Activated naive CD4-positive, alpha-beta T cell treated with anti-CD3 and anti-CD28 coated beads for 36 hours (primary cell): ENCODE measurements at regions of chr2 and their contacts with region 1.

Region 1: GRCh38 chr2:74147727-74148456 is at the start of gene BOLA3:
- DNase-seq: peak; percentile 90
- H3K4me3 Mint-ChIP-seq: no peak within 1 kb of the TSS
- H3K27ac Mint-ChIP-seq: no peak within 1 kb of the TSS
- H3K4me1 Mint-ChIP-seq: peaks cover 4% of the 10 kb centered on the region
- H3K27me3 Mint-ChIP-seq: no peaks in the 10 kb centered on the region
- total RNA-seq, gene BOLA3: 103 to 112 TPM

Region 2: DNA sequence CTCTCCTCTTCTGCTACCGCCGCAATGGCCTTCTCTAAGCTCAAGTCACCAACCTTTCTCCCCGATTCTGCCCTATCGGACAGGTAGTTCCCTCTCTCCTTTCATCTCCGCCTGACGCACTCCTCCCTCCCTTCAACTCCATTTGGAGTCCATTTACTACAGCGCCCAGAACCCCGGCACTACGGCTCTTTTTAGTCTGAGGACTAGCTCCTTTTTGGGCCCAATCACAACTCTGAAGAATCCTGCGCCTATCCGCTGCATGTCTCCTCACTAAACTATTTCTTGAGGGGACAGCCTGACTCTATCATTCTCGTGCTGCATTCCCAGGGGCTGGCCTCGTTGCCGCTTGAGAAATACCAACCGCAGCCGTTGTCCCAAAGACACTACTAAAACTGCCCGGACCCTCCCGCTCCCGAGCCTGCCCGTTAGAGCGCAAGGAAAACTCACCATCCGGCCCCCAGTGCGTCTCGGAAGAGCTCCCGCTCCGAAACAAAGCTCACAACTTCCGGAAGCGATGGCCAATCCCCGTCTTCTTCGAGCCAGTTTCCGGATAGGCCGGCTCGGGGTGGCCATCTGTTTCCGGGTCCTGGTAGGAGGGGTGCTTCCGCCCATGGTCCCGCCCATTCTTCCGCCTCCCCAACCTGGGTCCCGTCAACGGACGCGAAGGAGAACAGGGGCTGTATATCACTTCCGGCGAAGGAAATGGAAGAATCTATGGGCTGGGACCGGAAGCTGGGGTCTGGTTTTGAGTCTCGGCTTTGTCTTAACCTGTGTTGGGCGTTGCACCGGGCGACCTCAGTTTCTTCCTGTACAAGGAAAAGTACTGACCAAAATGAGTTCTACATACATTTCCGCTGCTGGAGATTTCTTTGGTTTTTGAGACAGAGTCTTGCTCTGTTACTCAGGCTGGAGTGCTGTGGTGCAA is 410.8 kb before region 1 on chr2 and contains the start of gene TPRKB:
- CTCF ChIA-PET with region 1: no interaction called
- intact Hi-C with region 1: loop called (anchors 2 kb)
- DNase-seq: peak; percentile 99
- H3K4me3 Mint-ChIP-seq: peak within 1 kb of the TSS; percentile 88
- H3K27ac Mint-ChIP-seq: peak within 1 kb of the TSS; percentile 76
- H3K4me1 Mint-ChIP-seq: peaks cover 15% of the 10 kb centered on the region
- H3K27me3 Mint-ChIP-seq: no peaks in the 10 kb centered on the region
- total RNA-seq, gene TPRKB: 30.5 to 32.5 TPM

Region 3: DNA sequence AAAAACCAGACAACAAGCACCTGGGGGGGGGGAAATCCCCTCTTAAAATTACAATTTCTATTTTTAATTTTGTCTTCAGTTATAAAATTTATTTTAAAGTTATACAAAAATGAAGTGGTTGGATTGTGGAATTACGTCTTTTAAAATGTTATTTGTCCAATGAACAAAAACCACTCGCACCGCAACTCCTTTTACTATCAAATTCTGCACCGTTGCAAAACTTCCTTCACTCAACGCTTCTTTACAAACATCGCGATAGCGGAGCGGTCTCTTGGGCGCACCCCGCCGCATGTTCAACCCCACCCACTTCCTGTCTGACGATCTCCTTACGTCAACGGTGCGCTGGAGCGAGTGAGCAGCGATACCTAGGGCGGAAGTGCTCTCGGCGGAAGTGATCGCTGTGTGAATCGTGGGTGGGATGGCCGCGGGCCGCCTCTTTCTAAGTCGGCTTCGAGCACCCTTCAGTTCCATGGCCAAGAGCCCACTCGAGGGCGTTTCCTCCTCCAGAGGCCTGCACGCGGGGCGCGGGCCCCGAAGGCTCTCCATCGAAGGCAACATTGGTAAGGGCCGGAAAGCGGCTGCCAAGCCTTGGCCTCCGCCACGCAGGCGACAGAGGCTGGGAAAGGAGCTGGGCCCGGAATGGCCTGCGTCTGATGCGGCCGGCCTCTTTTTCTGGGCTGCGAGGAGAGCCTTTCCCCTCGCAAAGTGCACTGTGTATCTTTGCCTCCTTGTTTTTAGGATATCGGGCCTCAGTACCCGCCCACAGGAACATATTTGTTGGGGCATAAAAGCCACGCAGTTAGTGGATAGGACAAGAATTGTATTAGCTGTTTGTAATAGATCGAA is 221.2 kb before region 1 on chr2 and contains the start of gene DGUOK:
- CTCF ChIA-PET with region 1: no interaction called
- intact Hi-C with region 1: loop called (anchors 1 kb)
- DNase-seq: peak; percentile 99
- H3K4me3 Mint-ChIP-seq: peak within 1 kb of the TSS; percentile 87
- H3K27ac Mint-ChIP-seq: peak within 1 kb of the TSS; percentile 94
- H3K4me1 Mint-ChIP-seq: peaks cover 44% of the 10 kb centered on the region
- H3K27me3 Mint-ChIP-seq: no peaks in the 10 kb centered on the region
- total RNA-seq, gene DGUOK: 112 to 115 TPM

Region 4: DNA sequence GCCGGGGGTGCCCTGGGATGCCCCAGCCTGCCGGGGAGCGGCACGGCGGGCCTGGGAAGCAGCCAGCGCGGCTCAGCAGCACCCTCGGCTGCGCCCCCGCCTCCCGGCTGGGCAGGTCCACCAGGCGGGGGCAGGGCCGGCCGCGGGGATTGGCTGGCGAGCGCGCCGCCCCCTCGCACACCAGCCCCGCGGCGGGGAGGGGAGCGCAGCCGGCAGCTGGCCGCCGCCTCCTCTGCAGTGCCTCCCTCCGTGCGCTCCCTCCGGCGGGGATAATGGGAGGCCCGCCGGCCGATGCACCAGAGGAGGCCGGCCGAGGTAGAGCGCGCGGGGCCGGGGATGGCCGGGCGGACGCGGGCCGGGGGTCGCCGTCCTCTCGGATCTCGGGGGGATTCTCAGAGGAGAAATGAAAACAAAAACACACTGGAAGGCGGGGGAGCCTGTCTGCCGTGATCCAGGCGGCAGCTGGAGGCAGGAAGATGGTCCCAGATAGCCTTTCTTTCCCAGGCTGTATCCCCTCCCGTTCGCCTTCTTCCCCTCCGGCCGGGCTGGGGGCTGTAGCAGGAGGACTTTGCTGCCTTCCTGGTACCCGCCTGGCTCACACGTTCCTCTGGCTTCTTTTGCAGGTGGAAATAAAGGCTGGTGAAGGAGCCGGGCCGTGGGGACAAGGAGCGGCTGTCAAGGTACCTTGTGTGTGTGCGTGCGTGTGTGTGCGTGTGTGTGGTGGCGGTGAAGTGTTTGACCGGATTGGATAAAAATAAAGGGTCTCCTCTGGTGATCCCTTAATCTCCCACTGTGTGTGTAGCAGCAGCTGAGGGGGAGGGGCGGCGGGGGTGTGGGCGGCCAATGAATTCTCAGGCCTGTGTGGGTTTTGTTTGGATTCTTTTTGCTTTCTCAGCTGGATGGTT is 145.2 kb before region 1 on chr2:
- CTCF ChIA-PET with region 1: interaction called, 6 read pairs
- intact Hi-C with region 1: loop called (anchors 1 kb)
- DNase-seq: peak; percentile 39
- H3K4me3 Mint-ChIP-seq: peak overlapping the region; percentile 67
- H3K27ac Mint-ChIP-seq: peak overlapping the region; percentile 69
- H3K4me1 Mint-ChIP-seq: peaks cover 83% of the 10 kb centered on the region
- H3K27me3 Mint-ChIP-seq: no peaks in the 10 kb centered on the region

Region 5: DNA sequence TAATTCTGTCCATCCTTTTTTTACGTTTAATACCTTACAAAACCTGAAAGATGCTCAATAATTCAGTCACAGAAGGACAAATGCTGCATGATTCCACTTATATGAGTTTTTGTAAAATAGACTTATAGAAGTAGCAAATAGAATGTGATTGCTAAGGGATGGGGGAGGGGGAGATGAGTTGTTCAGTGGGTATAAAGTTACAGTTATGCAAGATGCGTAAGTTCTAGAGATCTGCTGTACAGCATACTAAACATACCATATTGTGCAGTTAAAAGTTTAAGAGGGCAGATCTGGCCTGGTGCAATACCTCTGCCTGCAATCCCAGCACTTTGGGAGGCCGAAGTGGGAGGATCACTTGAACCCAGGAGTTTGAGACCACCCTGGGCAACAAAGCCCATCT is 84.4 kb before region 1 on chr2:
- CTCF ChIA-PET with region 1: no interaction called
- intact Hi-C with region 1: no loop called
- DNase-seq: no peak
- H3K4me3 Mint-ChIP-seq: no peak overlapping the region
- H3K27ac Mint-ChIP-seq: no peak overlapping the region
- H3K4me1 Mint-ChIP-seq: peaks cover 24% of the 10 kb centered on the region
- H3K27me3 Mint-ChIP-seq: no peaks in the 10 kb centered on the region

Region 6: DNA sequence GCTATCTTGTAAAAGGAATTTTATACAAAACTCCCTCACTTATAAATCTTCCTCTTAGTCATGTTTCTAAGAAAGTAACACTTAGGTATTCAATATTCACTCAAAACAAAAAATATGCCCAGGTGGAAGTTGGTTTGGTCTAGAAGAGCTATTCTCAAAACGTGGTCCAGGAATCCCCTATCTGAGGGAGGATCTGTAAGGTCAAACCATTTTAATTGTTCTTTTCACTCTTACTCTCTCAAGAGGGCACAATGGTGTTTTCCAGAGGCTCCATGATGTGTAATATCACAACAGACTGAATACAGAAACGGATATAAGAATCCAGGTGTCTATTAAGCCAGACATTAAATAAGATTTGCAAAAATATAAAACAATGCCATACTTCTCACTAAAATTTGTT is 20.8 kb after region 1 on chr2:
- CTCF ChIA-PET with region 1: interaction called, 10 read pairs
- intact Hi-C with region 1: no loop called
- DNase-seq: peak; percentile 27
- H3K4me3 Mint-ChIP-seq: no peak overlapping the region
- H3K27ac Mint-ChIP-seq: peak overlapping the region; percentile 87
- H3K4me1 Mint-ChIP-seq: peaks cover 26% of the 10 kb centered on the region
- H3K27me3 Mint-ChIP-seq: no peaks in the 10 kb centered on the region

Region 7: DNA sequence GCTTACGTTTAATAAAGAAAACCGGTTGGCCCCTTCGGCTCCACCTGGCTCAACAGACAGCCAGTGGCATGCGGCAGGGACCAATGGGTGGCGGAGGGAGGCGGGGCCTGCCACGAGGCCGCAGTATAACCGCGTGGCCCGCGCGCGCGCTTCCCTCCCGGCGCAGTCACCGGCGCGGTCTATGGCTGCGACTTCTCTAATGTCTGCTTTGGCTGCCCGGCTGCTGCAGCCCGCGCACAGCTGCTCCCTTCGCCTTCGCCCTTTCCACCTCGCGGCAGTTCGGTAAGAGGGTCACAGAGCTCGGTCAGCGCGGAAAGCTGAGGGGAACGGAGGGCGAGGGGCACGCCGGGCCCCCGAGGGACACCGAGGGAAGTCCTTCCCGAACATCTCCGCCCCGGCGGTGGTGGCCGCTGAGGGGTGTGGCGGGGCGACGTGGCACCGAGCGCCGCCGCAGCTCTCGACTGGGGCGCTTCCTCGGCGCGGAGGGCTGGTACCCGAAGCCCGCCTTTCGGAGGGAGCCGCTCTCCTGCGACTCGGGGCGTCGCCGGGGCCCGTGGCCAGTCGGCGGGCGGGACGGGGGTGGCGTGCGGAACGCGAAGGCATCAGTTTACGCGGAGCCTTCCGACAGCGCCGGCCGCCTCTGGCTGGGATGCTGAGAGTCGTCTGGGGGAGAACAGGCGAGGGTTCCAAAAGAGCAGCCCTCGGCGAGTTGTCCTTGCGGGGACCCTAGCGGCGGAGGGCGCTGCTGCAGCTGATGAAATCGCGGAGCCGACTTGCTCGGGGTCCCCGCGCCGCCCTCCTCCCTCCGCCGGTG is 50.8 kb after region 1 on chr2 and contains the start of gene MTHFD2:
- CTCF ChIA-PET with region 1: interaction called, 3 read pairs
- intact Hi-C with region 1: loop called (anchors 1 kb)
- DNase-seq: peak; percentile 95
- H3K4me3 Mint-ChIP-seq: peak within 1 kb of the TSS; percentile 97
- H3K27ac Mint-ChIP-seq: peak within 1 kb of the TSS; percentile 99
- H3K4me1 Mint-ChIP-seq: peaks cover 36% of the 10 kb centered on the region
- H3K27me3 Mint-ChIP-seq: no peaks in the 10 kb centered on the region
- total RNA-seq, gene MTHFD2: 683 to 692 TPM

Region 8: GRCh38 chr2:74391580-74392448 is 243.9 kb after region 1 on chr2:
- CTCF ChIA-PET with region 1: no interaction called
- intact Hi-C with region 1: loop called (anchors 10 kb)
- DNase-seq: peak; percentile 98
- H3K4me3 Mint-ChIP-seq: peak overlapping the region; percentile 92
- H3K27ac Mint-ChIP-seq: peak overlapping the region; percentile 96
- H3K4me1 Mint-ChIP-seq: peaks cover 4% of the 10 kb centered on the region
- H3K27me3 Mint-ChIP-seq: no peaks in the 10 kb centered on the region